HEK293T (cell line): ENCODE measurements at regions of chr12 and their contacts with region 1.

Region 1: DNA sequence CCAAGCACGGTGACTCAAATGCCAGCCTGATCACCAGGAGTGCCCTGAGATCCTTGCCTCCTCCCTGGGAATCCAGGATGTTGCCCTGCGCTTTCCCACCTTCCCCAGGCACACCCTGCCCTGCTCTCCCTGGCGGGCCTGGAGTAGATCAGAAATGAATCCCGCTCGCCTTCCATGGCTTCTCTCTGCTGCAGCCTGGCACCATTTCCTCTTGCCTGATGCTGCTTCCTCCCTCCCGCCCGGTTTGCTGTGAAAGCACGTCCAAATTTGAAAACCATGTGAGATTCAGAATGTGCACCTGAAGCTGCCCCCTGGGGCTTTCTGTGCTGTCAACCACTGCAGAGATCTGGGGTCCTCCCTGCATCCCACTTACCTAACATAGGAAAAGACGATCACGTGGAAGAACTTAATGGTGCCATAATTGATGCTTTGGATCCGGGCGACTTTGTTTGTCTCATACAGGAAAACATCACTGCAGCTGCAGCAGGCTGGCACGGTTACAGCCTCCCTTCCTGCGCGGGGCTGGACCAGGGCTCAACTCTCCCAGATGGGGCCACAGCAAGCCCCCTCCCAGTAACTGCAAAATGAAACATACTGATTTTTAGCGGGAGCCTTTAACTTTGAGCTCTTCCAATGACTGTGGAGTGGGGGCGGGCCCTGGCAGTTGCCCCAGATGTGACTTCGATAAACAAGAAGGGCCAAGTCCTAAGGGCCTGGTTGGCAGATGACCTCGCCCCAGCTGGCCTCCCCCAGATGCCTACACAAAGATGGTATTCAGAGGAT is 24.9 kb upstream of the C12orf76 start:
- DNase-seq: no peak

Region 2: GRCh38 chr12:110165540-110166159 is 92.4 kb after region 1 on chr12:
- CTCF ChIA-PET with region 1: no interaction called
- POLR2A ChIA-PET with region 1: no interaction called
- DNase-seq: no peak

Region 3: GRCh38 chr12:111636209-111636945 is 1563.1 kb after region 1 on chr12:
- CTCF ChIA-PET with region 1: interaction called, 11 read pairs
- POLR2A ChIA-PET with region 1: no interaction called
- DNase-seq: no peak